Naive thymus-derived CD4-positive, alpha-beta T cell (primary cell): ENCODE measurements at regions of chr22 and their contacts with region 1.

Region 1: GRCh38 chr22:37166675-37167066 is 17.0 kb upstream of the IL2RB start:
- DNase-seq: peak; percentile 69 to 84 (median 79)
- ATAC-seq: peak; percentile 79
- H3K4me3 ChIP-seq: peak overlapping the region; percentile 43
- H3K4me3 Mint-ChIP-seq: peak overlapping the region; percentile 60 to 87 (median 76)
- H3K27ac ChIP-seq: peak overlapping the region; percentile 53
- H3K27ac Mint-ChIP-seq: peak overlapping the region; percentile 67 to 93 (median 87)
- H3K4me1 ChIP-seq: peaks cover 65 to 89% of the 10 kb centered on the region in 2 donors
- H3K4me1 Mint-ChIP-seq: peaks cover 50 to 83% (median 71%) of the 10 kb centered on the region in 7 donors
- H3K27me3 ChIP-seq: no peaks in the 10 kb centered on the region
- H3K27me3 Mint-ChIP-seq: no peaks in the 10 kb centered on the region

Region 2: GRCh38 chr22:36781656-36782627 is 384.7 kb before region 1 on chr22:
- CTCF ChIA-PET with region 1: no interaction called
- POLR2A ChIA-PET with region 1: no interaction called
- intact Hi-C with region 1: loop called in 1 of 2 experiments (anchors 1 kb)
- DNase-seq: peak; percentile 66 to 92 (median 80)
- ATAC-seq: peak; percentile 98
- H3K4me3 ChIP-seq: no peak overlapping the region
- H3K4me3 Mint-ChIP-seq: peak overlapping the region in 4 of 10 donors; percentile 8 to 57 (median 43)
- H3K27ac ChIP-seq: no peak overlapping the region
- H3K27ac Mint-ChIP-seq: peak overlapping the region in 5 of 9 donors; percentile 27 to 72 (median 58)
- H3K4me1 ChIP-seq: peaks cover 4 to 10% of the 10 kb centered on the region in 2 donors
- H3K4me1 Mint-ChIP-seq: peaks cover 9 to 34% (median 18%) of the 10 kb centered on the region in 7 donors
- H3K27me3 ChIP-seq: no peaks in the 10 kb centered on the region
- H3K27me3 Mint-ChIP-seq: peaks cover 0 to 11% (median 7%) of the 10 kb centered on the region in 5 donors

Region 3: DNA sequence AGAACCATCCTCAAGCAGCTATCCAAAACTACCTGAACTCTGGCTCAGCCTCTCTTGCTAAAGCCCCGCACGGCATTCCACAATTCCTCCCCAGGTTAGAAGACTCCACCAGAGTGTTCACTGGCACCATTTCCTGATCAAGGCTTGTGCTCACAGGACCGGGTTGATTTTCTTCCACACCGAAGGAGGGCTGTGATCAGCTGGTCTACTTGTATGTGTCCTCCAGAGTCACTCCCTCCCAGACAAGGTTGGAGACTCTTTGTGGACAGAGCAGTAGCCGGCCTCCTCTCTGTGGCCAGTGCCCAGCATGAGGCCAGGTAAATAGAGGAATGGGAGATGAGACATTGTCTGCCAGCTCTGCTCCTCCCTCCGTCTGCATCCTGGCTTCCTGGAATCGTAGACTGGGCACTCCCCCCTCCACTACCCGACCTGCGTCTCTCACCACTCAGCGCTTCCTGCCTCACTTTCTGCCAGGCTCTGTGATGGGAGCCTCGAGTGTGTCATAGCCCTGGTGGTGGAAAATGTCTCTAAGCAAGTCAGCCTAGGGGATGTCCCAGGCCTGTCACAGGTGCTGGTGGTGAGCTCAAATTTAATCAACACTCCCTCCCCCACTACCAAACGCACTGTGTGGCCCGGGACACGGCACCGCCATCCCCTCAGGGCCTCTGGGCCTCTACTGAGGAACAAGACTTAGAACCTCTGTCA is 44.6 kb before region 1 on chr22:
- CTCF ChIA-PET with region 1: interaction called, 9 read pairs
- POLR2A ChIA-PET with region 1: interaction called, 15 read pairs
- intact Hi-C with region 1: loop called (anchors 1 kb)
- DNase-seq: peak; percentile 62 to 98 (median 94)
- ATAC-seq: peak; percentile 99
- H3K4me3 ChIP-seq: peak overlapping the region; percentile 30
- H3K4me3 Mint-ChIP-seq: peak overlapping the region; percentile 69 to 91 (median 79)
- H3K27ac ChIP-seq: peak overlapping the region; percentile 96
- H3K27ac Mint-ChIP-seq: peak overlapping the region; percentile 95 to 100 (median 98)
- H3K4me1 ChIP-seq: peaks cover 21 to 30% of the 10 kb centered on the region in 2 donors
- H3K4me1 Mint-ChIP-seq: peaks cover 19 to 86% (median 65%) of the 10 kb centered on the region in 7 donors
- H3K27me3 ChIP-seq: no peaks in the 10 kb centered on the region
- H3K27me3 Mint-ChIP-seq: peaks cover 0 to 2% (median 0%) of the 10 kb centered on the region in 5 donors

Region 4: GRCh38 chr22:37193629-37194191 is 27.0 kb after region 1 on chr22:
- CTCF ChIA-PET with region 1: interaction called, 18 read pairs
- POLR2A ChIA-PET with region 1: interaction called, 11 read pairs
- intact Hi-C with region 1: loop called (anchors 1 kb)
- DNase-seq: peak in 8 of 9 donors; percentile 44 to 63 (median 54)
- ATAC-seq: peak; percentile 56
- H3K4me3 ChIP-seq: peak overlapping the region; percentile 17
- H3K4me3 Mint-ChIP-seq: peak overlapping the region; percentile 8 to 84 (median 68)
- H3K27ac ChIP-seq: peak overlapping the region; percentile 58
- H3K27ac Mint-ChIP-seq: peak overlapping the region; percentile 75 to 96 (median 92)
- H3K4me1 ChIP-seq: peaks cover 30 to 42% of the 10 kb centered on the region in 2 donors
- H3K4me1 Mint-ChIP-seq: peaks cover 27 to 59% (median 49%) of the 10 kb centered on the region in 7 donors
- H3K27me3 ChIP-seq: no peaks in the 10 kb centered on the region
- H3K27me3 Mint-ChIP-seq: no peaks in the 10 kb centered on the region

Region 5: DNA sequence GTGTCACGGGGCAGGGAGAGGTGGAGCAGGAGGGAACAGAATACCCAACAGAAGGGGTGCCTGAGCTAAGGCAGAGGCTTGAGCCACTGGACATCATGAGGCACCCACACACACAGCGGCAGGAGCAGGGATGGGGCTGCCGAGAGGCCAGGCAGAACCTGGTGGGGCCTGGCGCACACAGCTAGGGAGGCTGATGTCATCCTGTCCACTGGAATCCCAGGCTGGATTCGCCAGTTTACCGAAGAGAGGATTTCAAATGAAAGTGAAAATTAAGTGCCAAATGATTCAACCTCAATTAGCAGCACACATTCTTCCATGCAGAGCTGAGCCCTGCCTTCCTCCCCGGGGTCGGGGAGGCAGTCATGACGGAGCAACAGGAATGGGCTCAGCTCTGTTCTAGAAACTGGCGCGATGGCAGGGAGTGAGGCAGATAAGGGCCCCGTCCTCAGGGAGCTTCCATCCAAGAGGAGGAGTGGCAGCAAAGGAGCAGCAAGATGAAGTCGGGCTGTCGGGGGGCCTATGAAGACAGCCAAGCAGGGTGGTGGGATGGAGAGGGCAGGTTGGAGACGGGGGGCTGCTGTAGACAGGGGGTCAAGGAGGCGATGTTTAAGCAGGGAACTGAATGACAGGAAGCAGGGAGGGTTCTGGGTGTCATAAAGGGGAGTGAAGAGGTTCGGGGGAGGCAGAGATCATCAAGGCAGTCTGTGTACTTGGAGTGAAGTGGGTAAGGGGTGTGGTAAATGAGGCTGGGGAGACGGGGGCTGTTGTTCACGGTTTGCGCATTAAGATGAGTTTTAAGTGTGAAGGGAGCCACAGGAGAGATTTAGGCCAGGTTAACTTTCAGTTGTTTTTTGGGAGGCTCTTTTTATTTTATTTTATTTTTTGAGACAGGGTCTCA is 70.9 kb after region 1 on chr22:
- CTCF ChIA-PET with region 1: no interaction called
- POLR2A ChIA-PET with region 1: interaction called, 6 read pairs
- intact Hi-C with region 1: loop called in 1 of 2 experiments (anchors 2 kb)
- DNase-seq: peak in 6 of 9 donors; percentile 21 to 63 (median 46)
- ATAC-seq: no peak
- H3K4me3 ChIP-seq: peak overlapping the region; percentile 49
- H3K4me3 Mint-ChIP-seq: peak overlapping the region; percentile 85 to 99 (median 92)
- H3K27ac ChIP-seq: peak overlapping the region; percentile 86
- H3K27ac Mint-ChIP-seq: peak overlapping the region; percentile 93 to 100 (median 98)
- H3K4me1 ChIP-seq: peaks cover 87 to 90% of the 10 kb centered on the region in 2 donors
- H3K4me1 Mint-ChIP-seq: peaks cover 80 to 100% (median 95%) of the 10 kb centered on the region in 7 donors
- H3K27me3 ChIP-seq: no peaks in the 10 kb centered on the region
- H3K27me3 Mint-ChIP-seq: no peaks in the 10 kb centered on the region

Region 6: DNA sequence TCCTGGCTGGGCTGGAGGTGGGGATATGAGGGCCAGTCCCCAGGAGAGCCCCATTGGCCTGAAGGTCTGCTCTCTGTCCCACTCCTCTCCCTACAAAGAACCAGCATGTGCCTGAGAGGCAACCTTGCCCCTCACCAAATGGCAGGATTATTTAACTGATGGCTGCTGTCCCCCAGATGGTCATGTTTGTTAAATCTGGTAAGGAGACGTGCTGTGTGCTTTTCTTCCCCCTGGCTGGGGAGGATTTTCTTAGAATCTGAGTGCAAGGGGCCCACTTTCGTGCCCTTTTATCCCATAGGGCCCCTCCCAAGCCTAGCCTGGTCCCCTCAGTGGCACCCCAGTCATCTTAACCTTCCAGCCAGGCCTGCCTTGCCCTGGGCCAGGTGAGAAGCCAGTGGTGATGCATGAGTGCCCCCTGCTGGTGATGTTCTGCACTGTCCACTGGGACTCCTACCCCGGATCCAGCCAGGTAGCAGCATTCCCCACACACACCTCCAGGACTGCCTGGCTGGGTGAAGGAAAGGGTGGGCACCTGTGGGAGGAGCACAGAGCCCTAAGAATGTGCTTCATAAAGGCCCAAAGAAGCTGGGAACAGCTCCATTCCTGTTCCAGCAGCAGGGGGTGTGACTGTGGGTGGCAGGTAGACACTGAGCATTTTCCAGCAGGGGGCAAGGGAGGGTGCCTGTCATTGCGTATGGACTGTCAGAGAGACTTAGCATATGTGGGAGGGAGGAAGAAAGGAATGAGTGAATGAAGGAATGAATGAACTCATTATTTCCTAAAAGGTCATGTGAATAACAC is 290.6 kb after region 1 on chr22:
- CTCF ChIA-PET with region 1: interaction called, 3 read pairs
- POLR2A ChIA-PET with region 1: no interaction called
- intact Hi-C with region 1: loop called in 1 of 2 experiments (anchors 5 kb)
- DNase-seq: peak; percentile 66 to 88 (median 77)
- ATAC-seq: peak; percentile 96
- H3K4me3 ChIP-seq: no peak overlapping the region
- H3K4me3 Mint-ChIP-seq: no peak overlapping the region
- H3K27ac ChIP-seq: no peak overlapping the region
- H3K27ac Mint-ChIP-seq: peak overlapping the region in 1 of 9 donors; percentile 51
- H3K4me1 ChIP-seq: no peaks in the 10 kb centered on the region
- H3K4me1 Mint-ChIP-seq: peaks cover 0 to 9% (median 5%) of the 10 kb centered on the region in 7 donors
- H3K27me3 ChIP-seq: no peaks in the 10 kb centered on the region
- H3K27me3 Mint-ChIP-seq: no peaks in the 10 kb centered on the region